Gastrocnemius medialis (tissue), 4 donors: ENCODE measurements at regions of chr9 and their contacts with region 1.

Region 1: DNA sequence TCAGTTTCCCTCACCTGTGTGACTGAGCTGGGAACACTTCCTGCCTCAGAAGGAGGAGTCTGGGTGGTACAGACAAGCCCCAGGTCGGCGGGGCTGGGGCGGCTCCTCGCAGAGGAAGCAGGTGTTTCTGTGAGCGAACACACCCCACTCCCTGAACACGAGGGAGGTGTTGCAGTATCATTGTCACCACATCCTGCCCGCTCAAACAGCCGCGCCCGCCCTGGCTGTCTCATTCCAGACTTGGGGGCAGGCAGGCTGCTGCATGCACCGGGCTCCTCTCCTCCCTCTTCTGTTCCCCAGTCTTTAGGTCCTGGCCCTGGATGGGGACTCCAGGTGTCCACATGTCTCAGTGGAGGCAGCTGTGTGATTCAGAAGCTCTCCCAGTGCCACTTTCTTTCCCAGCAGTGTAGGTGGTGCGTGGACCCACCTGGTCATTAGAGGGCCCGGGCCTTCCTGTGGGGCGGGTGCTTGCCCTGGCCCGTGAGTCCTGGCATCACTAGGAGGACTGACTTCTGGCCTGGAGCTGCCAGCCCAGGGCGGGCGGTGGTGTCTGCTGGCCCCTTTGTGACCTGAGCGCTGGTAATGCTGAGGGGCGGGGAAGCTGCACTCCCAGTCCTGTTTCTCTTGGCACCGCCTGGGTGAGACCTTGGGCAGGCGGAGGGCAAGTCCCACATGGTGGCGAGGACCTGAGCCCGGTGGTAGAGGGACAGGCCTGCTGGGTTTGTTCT is 18.3 kb upstream of the PHYHD1 start:
- DNase-seq: no peak
- ATAC-seq: peak; percentile 51 to 59
- H3K4me3 ChIP-seq: no peak overlapping the region
- H3K27ac ChIP-seq: peak overlapping the region; percentile 55 to 68 (median 62)
- H3K4me1 ChIP-seq: peaks cover 4 to 13% of the 10 kb centered on the region in 2 donors
- H3K27me3 ChIP-seq: no peaks in the 10 kb centered on the region
- CTCF ChIP-seq: no peak
- POLR2A ChIP-seq: peak; percentile 17 to 46

Region 2: GRCh38 chr9:128927731-128928411 is 25.4 kb after region 1 on chr9:
- in situ Hi-C with region 1: no loop called
- intact Hi-C with region 1: no loop called
- DNase-seq: peak in 1 of 2 donors; percentile 50
- ATAC-seq: peak; percentile 68 to 81
- H3K4me3 ChIP-seq: no peak overlapping the region
- H3K27ac ChIP-seq: peak overlapping the region in 3 of 4 donors; percentile 32 to 44 (median 33)
- H3K4me1 ChIP-seq: peaks cover 7 to 10% of the 10 kb centered on the region in 2 donors
- H3K27me3 ChIP-seq: no peaks in the 10 kb centered on the region
- CTCF ChIP-seq: peak; percentile 75 to 93 (median 91)
- POLR2A ChIP-seq: no peak

Region 3: GRCh38 chr9:128940271-128940921 is 37.9 kb after region 1 on chr9:
- in situ Hi-C with region 1: no loop called
- intact Hi-C with region 1: loop called (anchors 1 kb)
- DNase-seq: no peak
- ATAC-seq: peak in 1 of 2 donors; percentile 31
- H3K4me3 ChIP-seq: no peak overlapping the region
- H3K27ac ChIP-seq: peak overlapping the region in 3 of 4 donors; percentile 44 to 72 (median 49)
- H3K4me1 ChIP-seq: no peaks in the 10 kb centered on the region
- H3K27me3 ChIP-seq: no peaks in the 10 kb centered on the region
- CTCF ChIP-seq: no peak
- POLR2A ChIP-seq: no peak

Region 4: GRCh38 chr9:129125476-129125875 is 223.0 kb after region 1 on chr9:
- in situ Hi-C with region 1: no loop called
- intact Hi-C with region 1: no loop called
- DNase-seq: no peak
- ATAC-seq: no peak
- H3K4me3 ChIP-seq: no peak overlapping the region
- H3K27ac ChIP-seq: peak overlapping the region in 2 of 4 donors; percentile 3 to 18
- H3K4me1 ChIP-seq: peaks cover 34 to 44% of the 10 kb centered on the region in 2 donors
- H3K27me3 ChIP-seq: no peaks in the 10 kb centered on the region
- CTCF ChIP-seq: no peak
- POLR2A ChIP-seq: no peak